ENCODE measurements at regions of chr14 and their contacts with region 1.

Region 1: GRCh38 chr14:91418387-91419043 is 895 bp upstream of the CCDC88C start:
- DNase-seq: peak; percentile 72
- ATAC-seq: peak; percentile 13
- H3K4me3 ChIP-seq: peak overlapping the region; percentile 52
- H3K27ac ChIP-seq: peak overlapping the region; percentile 36; the same call in 1 of the 2 replicates
- H3K4me1 ChIP-seq: peaks cover 17% of the 10 kb centered on the region
- H3K27me3 ChIP-seq: no peaks in the 10 kb centered on the region
- CTCF ChIP-seq: peak; percentile 97

Region 2: GRCh38 chr14:91377700-91378652 is 40.5 kb before region 1 on chr14:
- CTCF ChIA-PET with region 1: interaction called, 3 read pairs
- POLR2A ChIA-PET with region 1: no interaction called
- intact Hi-C with region 1: loop called (anchors 1 kb)
- DNase-seq: peak; percentile 3
- ATAC-seq: peak; percentile 48
- H3K4me3 ChIP-seq: no peak overlapping the region
- H3K27ac ChIP-seq: no peak overlapping the region
- H3K4me1 ChIP-seq: peaks cover 39% of the 10 kb centered on the region
- H3K27me3 ChIP-seq: no peaks in the 10 kb centered on the region
- CTCF ChIP-seq: no peak

Measured in PC-3 (cell line).